Right lobe of liver (tissue), 6 donors: ENCODE measurements at regions of chr11 and their contacts with region 1.

Region 1: DNA sequence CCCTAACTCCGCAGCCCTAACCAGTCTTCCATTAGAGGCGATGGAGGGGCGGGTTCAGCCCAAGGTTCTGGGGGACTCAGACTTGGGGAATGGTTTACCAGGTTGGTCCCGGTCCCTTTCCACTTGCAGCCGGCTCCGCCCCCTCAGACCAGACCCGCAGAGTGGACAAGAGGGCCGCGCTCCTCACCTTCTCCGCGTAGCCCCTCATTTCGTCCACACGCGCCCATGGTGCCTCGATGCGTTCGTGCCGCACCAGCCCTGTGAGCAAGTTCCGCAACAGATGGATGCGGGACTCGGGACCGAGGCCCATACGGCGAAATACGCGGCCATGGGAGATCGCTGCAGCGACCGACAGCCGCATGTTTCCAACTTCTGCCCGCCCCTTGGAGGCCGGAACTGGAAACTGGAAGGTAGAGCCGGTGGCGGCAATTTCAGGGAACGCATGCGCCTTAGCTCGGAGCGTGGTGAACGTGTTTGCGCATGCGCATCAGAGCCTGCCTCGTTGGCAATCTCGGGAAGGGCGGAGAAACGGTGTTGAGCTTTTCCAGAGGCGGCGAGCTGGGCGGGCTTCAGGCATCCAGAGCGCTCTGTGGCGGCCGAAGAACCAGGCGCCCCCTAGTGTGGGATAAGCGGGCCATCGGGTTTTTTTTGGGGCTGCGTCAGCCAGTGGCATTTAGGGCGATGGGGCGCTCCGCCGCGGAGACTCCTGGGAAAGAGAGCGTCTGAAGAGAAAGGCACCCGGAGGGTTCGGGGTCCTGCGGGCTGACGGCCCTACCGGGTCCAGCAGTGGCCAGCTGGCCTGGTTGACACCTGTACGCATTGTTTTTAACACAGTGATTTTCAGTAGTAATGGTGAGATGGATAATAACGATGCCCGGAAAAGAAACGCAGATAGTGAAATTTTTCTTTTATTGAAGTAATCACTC is at the start of gene MRPL17:
- DNase-seq: peak; percentile 99
- ATAC-seq: peak; percentile 98 to 99 (median 98)
- H3K4me3 ChIP-seq: peak within 1 kb of the TSS; percentile 67 to 88 (median 73)
- H3K27ac ChIP-seq: peak within 1 kb of the TSS; percentile 78 to 80 (median 79)
- H3K4me1 ChIP-seq: peaks cover 0 to 15% (median 4%) of the 10 kb centered on the region in 4 donors
- H3K27me3 ChIP-seq: no peaks in the 10 kb centered on the region
- CTCF ChIP-seq: peak; percentile 89 to 97 (median 94)
- POLR2A ChIP-seq: peak; percentile 86
- total RNA-seq, gene MRPL17: 10.7 to 21.6 (median 17.3) TPM

Region 2: DNA sequence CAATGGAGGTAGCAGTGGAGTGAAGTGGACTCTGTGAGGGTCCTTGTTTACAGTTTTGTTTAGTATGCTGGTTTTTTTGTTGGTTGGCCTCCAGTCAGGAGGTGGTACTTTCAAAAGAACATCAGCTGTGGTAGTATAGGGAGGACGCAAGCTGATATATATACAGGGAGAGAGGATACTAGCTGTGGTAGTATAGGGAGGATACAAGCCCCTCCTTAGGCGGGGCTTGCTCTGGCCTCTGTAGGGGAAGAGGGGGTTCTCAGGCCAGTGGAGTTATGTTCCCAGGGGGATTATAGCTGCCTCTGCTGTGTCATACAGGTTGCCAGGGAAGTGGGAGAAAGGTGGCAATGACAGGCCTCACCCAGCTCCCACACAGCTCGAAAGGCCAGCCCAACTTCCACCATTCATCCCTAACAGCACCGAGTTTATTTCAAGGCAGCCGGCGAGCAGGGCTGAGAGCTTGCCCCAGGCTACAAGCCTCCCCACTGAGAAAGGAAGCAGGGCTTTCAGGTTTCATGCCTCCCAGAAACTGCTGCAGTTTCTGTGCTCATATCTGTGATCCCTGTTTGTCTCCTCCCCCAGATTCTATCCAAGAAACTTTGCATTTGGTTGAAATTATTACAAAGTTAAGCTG is 851.9 kb before region 1 on chr11:
- intact Hi-C with region 1: no loop called
- DNase-seq: peak in 1 of 3 donors; percentile 22
- ATAC-seq: no peak
- H3K4me3 ChIP-seq: no peak overlapping the region
- H3K27ac ChIP-seq: no peak overlapping the region
- H3K4me1 ChIP-seq: no peaks in the 10 kb centered on the region
- H3K27me3 ChIP-seq: no peaks in the 10 kb centered on the region
- CTCF ChIP-seq: no peak
- POLR2A ChIP-seq: no peak

Region 3: DNA sequence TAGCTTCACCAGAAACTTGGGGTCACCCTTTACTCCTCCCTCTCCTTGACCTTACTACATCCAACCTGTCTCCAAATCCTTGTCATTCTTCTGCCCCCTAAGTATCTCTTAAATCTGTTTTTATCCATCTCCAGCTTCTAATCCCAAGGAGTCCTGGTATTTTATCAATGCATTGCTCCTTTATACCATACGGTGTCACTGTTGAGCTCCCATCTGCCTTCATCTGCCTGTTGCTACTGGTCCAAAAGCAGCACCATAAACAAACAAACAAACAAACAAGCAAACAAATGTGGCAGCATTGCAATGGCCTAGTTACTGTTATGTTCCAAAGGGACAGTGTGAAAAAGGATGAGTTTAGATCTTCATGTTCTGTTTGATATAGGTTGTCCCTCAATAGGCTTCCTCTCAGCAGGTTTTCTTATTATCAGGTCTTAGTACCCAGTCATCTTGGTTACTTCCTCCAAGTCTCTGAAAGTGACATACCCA is 151.9 kb before region 1 on chr11:
- intact Hi-C with region 1: loop called (anchors 10 kb)
- DNase-seq: no peak
- ATAC-seq: peak; percentile 82 to 91 (median 88)
- H3K4me3 ChIP-seq: no peak overlapping the region
- H3K27ac ChIP-seq: no peak overlapping the region
- H3K4me1 ChIP-seq: no peaks in the 10 kb centered on the region
- H3K27me3 ChIP-seq: no peaks in the 10 kb centered on the region
- CTCF ChIP-seq: peak; percentile 67 to 89 (median 73)
- POLR2A ChIP-seq: no peak